GM12878 (cell line): ENCODE measurements at regions of chr9 and their contacts with region 1.

Region 1: GRCh38 chr9:84271531-84271900 is 69.0 kb downstream of the SLC28A3 start:
- DNase-seq: no peak
- ATAC-seq: peak; percentile 82
- H3K4me3 ChIP-seq: peak overlapping the region; percentile 48
- H3K27ac ChIP-seq: no peak overlapping the region
- H3K4me1 ChIP-seq: peaks cover 4% of the 10 kb centered on the region; the same call in 1 of the 2 replicates
- H3K27me3 ChIP-seq: no peaks in the 10 kb centered on the region
- CTCF ChIP-seq: no peak
- EP300 ChIP-seq: no peak
- POLR2A ChIP-seq: no peak
- RAD21 ChIP-seq: no peak

Region 2: GRCh38 chr9:83965350-83966208 is 305.9 kb before region 1 on chr9:
- CTCF ChIA-PET with region 1: no interaction called
- POLR2A ChIA-PET with region 1: no interaction called
- RAD21 ChIA-PET with region 1: no interaction called
- SMC1A ChIA-PET with region 1: no interaction called
- in situ Hi-C with region 1: no loop called
- intact Hi-C with region 1: no loop called
- DNase-seq: no peak
- ATAC-seq: peak; percentile 44
- H3K4me3 ChIP-seq: no peak overlapping the region
- H3K27ac ChIP-seq: no peak overlapping the region
- H3K4me1 ChIP-seq: no peaks in the 10 kb centered on the region
- H3K27me3 ChIP-seq: no peaks in the 10 kb centered on the region
- CTCF ChIP-seq: no peak
- EP300 ChIP-seq: no peak
- POLR2A ChIP-seq: peak; percentile 18
- RAD21 ChIP-seq: no peak

Region 3: DNA sequence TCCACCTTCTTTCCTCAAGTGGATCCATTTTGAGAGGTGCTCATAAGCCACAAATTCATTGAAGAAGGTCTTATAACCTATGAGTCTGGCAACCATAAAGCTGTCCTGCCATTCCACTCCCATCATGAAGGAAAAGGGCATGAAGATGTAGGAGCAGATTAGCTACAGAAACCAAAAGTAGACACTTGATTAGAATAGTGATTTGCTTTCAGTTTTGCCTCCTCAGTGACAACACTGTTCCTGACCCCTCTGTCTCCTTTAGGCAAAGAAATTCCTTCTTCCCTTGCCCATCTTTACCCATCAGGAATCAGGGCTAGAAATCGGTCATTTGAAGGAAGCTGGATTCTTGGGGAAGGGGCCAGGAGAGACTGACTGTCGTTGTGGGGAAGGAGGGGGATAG is 13.9 kb after region 1 on chr9:
- CTCF ChIA-PET with region 1: interaction called, 12 read pairs
- POLR2A ChIA-PET with region 1: interaction called, 4 read pairs
- RAD21 ChIA-PET with region 1: interaction called, 6 read pairs
- SMC1A ChIA-PET with region 1: interaction called, 11 read pairs
- in situ Hi-C with region 1: no loop called
- intact Hi-C with region 1: no loop called
- DNase-seq: no peak
- ATAC-seq: peak; percentile 58; the same call in 2 of the 3 replicates
- H3K4me3 ChIP-seq: peak overlapping the region; percentile 47; the same call in 1 of the 2 replicates
- H3K27ac ChIP-seq: no peak overlapping the region
- H3K4me1 ChIP-seq: peaks cover 5% of the 10 kb centered on the region; the same call in 1 of the 2 replicates
- H3K27me3 ChIP-seq: no peaks in the 10 kb centered on the region
- CTCF ChIP-seq: no peak
- EP300 ChIP-seq: no peak
- POLR2A ChIP-seq: no peak
- RAD21 ChIP-seq: no peak